ENCODE measurements at regions of chr4 and their contacts with region 1.

Region 1: DNA sequence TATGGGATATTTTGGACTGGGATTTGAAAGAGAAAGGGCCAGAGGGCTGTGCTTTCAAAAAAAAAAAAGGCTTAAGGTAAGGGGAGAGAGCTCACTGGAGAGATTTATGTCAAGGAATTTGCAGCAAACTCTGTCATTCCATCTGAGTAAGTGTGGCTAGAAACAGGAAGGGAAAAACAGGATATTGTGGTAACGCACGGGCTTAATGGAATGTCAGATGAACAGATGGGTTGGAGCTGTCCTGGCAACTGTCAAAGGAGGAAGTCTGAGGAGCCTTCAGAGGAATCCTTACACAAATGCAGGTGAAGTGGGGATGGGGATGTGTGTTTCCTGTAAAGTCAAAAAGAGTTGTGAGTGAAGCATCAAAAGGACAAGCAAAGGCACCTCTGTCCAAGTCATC is 15.1 kb upstream of the NKX3-2 start:
- DNase-seq: no peak
- H3K4me3 ChIP-seq: no peak overlapping the region
- H3K27ac ChIP-seq: no peak overlapping the region
- H3K27me3 ChIP-seq: peaks cover 0 to 8% (median 0%) of the 10 kb centered on the region in 45 donors
- CTCF ChIP-seq: no peak

Region 2: DNA sequence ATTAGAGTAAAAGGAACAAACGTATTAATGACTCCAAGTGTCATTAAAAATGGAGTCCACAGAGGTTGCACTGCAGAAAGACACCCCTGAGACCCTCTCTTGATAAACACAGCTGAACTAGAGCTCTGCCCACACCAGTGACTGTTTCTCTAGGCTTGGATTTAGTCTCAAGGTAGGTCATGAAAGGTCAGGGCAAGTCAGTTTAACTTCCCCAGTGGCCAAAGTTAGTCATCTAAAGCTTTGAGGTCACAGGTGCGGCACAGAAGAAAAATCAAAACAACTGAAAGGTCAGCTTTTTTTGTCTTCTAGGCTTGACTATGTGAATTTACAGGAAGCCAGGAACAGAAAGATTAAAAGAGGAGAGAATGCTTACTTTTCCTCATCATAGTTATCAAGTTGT is 824.8 kb before region 1 on chr4:
- intact Hi-C with region 1: loop called in 1 of 2 experiments (anchors 10 kb)
- DNase-seq: no peak
- H3K4me3 ChIP-seq: no peak overlapping the region
- H3K27ac ChIP-seq: no peak overlapping the region
- H3K27me3 ChIP-seq: peaks cover 0 to 9% (median 0%) of the 10 kb centered on the region in 45 donors
- CTCF ChIP-seq: no peak

Region 3: DNA sequence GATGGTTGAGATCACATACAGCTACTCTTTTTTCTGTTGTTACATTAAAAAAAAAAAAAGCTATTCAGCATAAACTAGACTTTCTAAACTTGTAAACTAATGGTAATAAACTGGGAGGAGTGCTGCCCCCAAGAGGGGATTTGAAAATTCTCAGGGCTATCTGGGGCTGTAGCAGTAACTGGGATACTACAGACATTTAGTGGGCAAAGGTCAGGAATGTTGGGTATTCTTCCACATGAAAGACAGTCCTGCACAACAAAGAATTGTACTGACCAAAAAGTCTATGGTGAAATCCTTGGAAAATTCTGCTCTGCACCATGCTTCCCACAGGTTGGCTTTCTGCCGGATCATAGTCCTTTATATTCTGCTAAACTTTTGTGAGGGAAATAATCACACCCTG is 300.7 kb after region 1 on chr4:
- intact Hi-C with region 1: no loop called
- DNase-seq: peak in 2 of 10 donors; percentile 36 to 48
- H3K4me3 ChIP-seq: no peak overlapping the region
- H3K27ac ChIP-seq: no peak overlapping the region
- H3K27me3 ChIP-seq: no peaks in the 10 kb centered on the region
- CTCF ChIP-seq: peak in 47 of 56 donors; percentile 12 to 71 (median 42)